Posterior cingulate gyrus (tissue), 11 donors: ENCODE measurements at regions of chr19 and their contacts with region 1.

Region 1: GRCh38 chr19:19138169-19138981 is at the start of gene TMEM161A:
- DNase-seq: peak; percentile 95 to 100 (median 97)

Region 2: DNA sequence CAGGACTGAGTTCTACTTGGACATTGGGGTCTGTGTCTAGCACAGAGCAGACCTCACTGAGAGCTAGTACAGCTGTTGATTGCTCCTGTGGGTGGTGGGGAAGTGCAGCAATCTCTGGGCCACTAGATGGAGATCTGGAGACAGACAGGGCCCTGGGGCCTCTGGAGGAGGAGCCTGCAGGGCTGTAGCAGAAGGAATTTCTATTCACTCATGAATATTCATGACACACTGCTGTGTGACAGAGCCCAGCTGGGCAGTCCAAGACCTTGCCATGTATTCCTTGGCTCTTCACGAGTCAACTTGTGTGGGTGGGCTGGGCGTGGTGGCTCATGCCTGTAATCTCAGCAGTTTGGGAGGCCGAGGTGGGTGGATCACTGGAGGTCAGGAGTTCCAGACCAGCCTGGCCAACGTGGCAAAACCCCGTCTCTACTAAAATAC is 142.6 kb before region 1 on chr19:
- intact Hi-C with region 1: loop called (anchors 5 kb)
- DNase-seq: peak; percentile 58 to 97 (median 70)

Region 3: GRCh38 chr19:19053508-19054314 is 84.7 kb before region 1 on chr19:
- intact Hi-C with region 1: loop called (anchors 5 kb)
- DNase-seq: peak in 9 of 10 donors; percentile 44 to 96 (median 71)

Region 4: DNA sequence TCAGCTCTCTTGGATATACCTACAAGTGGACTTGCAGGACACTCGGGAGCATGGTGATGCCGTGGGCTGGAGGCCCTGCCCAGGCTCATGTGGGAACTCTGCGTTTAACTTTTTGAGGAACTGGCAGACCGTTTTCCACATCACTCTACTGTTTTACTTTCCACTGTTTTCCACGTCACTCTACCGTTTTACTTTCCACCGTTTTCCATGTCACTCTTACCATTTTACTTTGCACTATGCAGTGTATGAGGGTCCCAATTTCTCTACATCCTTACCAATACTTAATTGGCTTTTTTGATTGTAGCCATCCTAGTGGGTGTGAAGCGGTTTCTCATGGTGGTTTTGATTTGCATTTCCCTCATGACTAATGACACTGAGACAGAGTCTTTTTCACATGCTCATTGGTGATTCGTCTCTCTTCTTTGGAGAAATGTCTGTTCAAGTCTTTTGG is 307.6 kb after region 1 on chr19:
- intact Hi-C with region 1: no loop called
- DNase-seq: peak in 2 of 10 donors; percentile 45 to 78